HEK293T (cell line): ENCODE measurements at regions of chr12 and their contacts with region 1.

Region 1: GRCh38 chr12:110600254-110600653 is 13.7 kb upstream of the TCTN1 start:
- DNase-seq: no peak

Region 2: GRCh38 chr12:110449799-110450497 is 150.3 kb before region 1 on chr12 and contains the start of gene ARPC3:
- CTCF ChIA-PET with region 1: interaction called, 15 read pairs
- POLR2A ChIA-PET with region 1: interaction called, 13 read pairs
- DNase-seq: peak; percentile 93

Region 3: DNA sequence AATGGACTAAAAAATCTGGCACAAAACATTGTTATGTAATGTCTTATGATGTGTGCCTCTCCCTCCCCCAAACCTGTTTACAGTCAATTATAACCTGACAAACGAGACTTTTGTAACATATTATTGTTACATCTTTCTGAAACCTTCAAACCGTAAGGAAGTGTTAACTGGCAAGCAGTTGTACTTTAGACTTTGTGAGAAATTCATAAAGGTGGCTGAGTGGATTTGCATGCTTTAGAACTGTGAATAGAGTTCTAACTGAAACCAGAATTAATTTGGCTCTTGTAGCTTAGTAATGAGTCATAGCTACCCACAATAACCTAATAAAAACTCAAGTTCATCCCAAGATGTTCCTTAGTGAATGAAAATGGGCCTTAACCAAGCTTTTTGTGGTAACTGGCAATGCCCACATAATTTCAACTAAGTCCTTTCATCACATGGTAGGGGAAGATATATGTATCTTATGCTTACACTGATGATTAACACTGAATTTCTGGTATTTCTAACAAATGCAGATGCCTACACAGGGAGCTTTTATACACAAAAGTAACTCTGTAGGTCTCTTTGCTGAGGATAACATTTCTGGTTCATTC is 68.4 kb before region 1 on chr12:
- CTCF ChIA-PET with region 1: no interaction called
- POLR2A ChIA-PET with region 1: no interaction called
- DNase-seq: no peak

Region 4: GRCh38 chr12:110550981-110551380 is 49.3 kb before region 1 on chr12:
- CTCF ChIA-PET with region 1: interaction called, 19 read pairs
- POLR2A ChIA-PET with region 1: no interaction called
- DNase-seq: no peak

Region 5: GRCh38 chr12:110575326-110575725 is 24.9 kb before region 1 on chr12:
- CTCF ChIA-PET with region 1: no interaction called
- POLR2A ChIA-PET with region 1: no interaction called
- DNase-seq: no peak

Region 6: DNA sequence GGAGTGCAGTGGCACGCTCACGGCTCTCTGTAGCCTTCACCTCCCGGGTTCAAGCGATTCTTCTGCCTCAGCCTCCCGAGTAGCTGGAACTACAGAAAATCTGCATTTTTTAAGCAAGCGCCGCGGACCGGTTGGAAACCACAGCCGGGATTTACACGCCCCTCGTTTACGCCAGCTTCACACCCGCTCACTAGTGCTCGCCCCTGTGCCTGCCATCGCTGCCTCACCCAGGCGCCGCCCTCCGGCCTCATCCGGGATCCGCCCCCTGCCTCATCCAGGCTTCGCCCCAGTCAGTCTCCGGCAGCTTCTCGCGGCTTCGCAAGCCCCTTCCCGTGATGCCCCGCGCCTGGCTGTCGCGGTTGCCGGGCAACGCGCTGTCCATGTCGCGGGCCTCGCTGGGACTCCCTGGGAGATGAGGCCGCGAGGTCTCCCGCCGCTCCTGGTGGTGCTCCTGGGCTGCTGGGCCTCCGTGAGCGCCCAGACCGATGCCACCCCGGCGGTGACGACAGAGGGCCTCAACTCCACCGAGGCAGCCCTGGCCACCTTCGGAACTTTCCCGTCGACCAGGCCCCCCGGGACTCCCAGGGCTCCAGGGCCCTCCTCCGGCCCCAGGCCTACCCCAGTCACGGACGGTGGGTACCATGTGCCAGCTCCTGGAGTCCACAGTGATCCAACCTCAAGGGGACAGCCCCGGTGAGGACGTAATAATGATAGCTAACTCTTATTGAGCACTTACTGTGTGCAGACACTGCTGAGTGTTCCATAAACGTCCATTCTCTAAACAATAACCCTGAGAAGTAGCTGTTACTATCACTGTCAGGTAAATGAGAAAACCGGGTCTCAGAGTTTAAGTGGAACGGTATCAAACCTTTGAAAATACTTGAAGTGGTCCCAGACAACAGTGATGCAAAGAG is 13.8 kb after region 1 on chr12 and contains the start of gene TCTN1:
- CTCF ChIA-PET with region 1: interaction called, 17 read pairs
- POLR2A ChIA-PET with region 1: interaction called, 6 read pairs
- DNase-seq: peak; percentile 98